PC-9 (cell line): ENCODE measurements at regions of chr2 and their contacts with region 1.

Region 1: GRCh38 chr2:146214394-146214929 is 1630.4 kb upstream of the ACVR2A start:
- DNase-seq: no peak
- H3K4me3 ChIP-seq: no peak overlapping the region
- H3K27ac ChIP-seq: no peak overlapping the region
- H3K4me1 ChIP-seq: no peaks in the 10 kb centered on the region
- H3K27me3 ChIP-seq: no peaks in the 10 kb centered on the region
- CTCF ChIP-seq: no peak

Region 2: DNA sequence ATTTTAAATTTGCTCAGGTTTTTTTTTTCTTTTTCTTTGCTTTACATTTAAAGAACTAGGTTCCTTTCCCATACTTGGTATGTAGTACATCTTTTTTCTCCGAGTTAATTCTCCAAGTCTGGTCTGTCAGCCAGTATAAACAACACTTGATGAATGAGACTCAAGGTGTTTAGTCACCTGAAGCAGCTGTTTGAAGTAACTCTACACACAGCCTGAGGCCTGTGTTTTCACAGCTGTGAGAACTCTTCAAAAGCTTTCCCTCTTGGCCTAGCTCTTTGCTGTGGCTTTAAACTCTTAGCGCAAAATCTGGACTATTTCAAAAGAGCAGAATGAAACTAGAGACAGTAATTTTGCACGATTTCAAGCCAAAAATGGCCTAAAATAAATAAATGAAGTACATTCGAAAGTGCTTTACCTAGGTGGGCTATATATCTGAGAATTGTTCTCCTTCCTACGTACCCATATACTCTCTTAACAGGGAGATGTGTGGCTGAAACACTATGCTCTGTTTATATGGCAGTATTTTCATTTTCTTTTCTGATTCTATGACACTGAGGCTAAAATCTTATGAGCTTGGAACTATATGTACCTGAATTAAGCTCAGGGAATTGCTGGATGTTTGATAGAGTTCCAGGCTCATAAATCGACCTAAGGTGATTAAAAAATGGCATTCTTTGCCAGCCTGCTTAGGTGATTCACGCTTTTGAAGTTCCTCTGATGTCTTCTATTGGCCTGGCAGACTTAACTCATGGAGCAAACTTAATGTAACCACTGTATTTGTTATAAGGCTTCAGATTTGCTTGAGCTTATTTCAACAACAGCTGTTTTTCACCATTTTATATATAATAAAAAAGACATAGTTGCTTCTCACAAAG is 650.5 kb before region 1 on chr2:
- CTCF ChIA-PET with region 1: no interaction called
- POLR2A ChIA-PET with region 1: interaction called, 10 read pairs
- intact Hi-C with region 1: no loop called
- DNase-seq: peak; percentile 11 to 74
- H3K4me3 ChIP-seq: no peak overlapping the region
- H3K27ac ChIP-seq: no peak overlapping the region
- H3K4me1 ChIP-seq: 0 out of 2 replicates have a peak, but pooled peaks cover 4% of the 10 kb centered on the region
- H3K27me3 ChIP-seq: no peaks in the 10 kb centered on the region
- CTCF ChIP-seq: no peak